ENCODE measurements at regions of chrX and their contacts with region 1.

Region 1: DNA sequence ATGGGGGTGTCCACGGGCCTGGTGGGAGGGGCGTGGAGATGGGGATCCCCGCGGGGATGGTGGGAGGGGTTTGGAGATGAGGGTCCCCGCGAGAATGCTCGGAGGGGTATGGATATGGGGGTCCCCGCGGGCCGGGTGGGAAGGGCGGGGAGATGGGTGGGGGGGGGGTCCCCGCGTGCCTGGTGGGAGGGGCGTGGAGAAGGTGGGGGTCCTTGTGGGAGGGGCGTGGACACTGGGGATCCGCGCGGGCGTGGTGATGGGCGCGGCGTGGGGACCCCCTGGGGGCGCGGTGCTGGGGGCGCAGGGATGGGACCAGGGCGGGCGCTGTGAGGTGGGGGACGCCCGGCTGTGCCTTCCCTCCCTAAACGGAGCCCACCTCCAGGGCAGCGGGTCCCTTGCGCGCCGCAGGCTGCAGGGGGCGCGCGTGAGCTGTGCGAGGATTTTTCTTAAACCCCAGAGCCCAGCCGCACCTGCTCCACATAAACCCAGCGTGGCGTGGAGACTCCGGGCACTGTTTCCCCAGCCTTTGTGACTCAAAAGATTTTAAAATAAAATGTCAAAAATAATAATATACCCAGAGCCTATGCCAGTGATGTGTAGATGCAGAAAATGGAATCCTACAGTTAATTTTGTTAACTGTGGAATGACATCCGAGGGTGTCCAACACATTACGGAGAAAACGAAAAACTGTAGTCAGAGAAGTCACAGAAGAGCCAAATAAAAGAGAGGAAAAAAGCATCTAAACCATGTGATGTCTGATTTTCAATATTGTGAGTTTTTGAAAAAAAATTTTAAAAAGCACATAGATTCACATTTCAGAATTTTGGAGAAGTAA is 1.5 kb upstream of the ASMTL start:
- DNase-seq: peak; percentile 46 to 91
- H3K4me3 ChIP-seq: peak overlapping the region; percentile 89
- H3K27ac ChIP-seq: peak overlapping the region; percentile 37 to 95
- H3K4me1 ChIP-seq: peaks cover 12 to 13% of the 10 kb centered on the region in 2 donors
- H3K27me3 ChIP-seq: no peaks in the 10 kb centered on the region
- CTCF ChIP-seq: peak; percentile 93 to 98 (median 98)

Region 2: DNA sequence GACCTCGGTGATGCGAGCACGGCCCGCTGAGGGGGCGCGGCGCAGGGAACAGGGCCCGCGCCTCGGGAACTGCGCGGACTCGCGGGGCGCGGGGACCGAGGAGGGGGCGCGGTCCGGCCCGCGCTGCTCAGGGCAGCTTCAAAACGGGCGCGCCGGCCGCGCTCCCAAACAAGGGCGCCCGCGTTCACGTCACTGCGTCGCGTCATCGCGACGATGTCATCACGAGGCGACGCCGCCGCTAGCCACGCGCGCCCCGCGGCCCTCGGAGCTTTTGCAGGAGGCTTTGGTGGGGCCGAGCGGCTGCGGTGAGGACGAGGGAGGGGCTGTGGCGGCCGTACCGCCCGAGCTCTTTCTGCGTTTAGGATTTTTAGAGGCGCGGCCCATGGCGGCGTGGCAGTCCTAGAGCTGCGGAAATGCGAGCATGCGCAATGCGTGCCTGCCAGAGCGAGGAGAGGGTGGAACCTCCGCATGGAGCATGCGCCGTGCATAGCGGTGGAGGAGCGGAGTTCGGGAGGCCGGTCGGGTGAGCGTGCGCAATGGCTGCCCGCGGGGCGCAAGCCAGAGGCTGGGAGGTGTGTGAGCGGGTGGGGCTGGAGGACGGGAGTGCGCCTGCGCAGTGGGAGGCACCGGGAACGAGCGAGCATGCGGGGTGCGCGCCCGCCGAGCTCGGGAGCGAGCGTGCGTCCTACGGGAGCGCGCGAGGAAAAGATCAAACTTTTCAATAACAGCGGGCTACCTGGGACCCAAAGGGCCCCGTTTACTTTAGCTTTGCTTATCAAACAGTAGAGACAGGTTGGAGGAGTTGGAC is 1067.2 kb before region 1 on chrX and contains the start of gene PPP2R3B:
- intact Hi-C with region 1: loop called (anchors 2 kb)
- DNase-seq: peak; percentile 91 to 99
- H3K4me3 ChIP-seq: peak within 1 kb of the TSS; percentile 72 to 92
- H3K27ac ChIP-seq: peak within 1 kb of the TSS; percentile 94 to 99
- H3K4me1 ChIP-seq: peaks cover 0 to 5% of the 10 kb centered on the region in 2 donors
- H3K27me3 ChIP-seq: no peaks in the 10 kb centered on the region
- CTCF ChIP-seq: no peak
- total RNA-seq, gene PPP2R3B: 43.4 TPM

Region 3: DNA sequence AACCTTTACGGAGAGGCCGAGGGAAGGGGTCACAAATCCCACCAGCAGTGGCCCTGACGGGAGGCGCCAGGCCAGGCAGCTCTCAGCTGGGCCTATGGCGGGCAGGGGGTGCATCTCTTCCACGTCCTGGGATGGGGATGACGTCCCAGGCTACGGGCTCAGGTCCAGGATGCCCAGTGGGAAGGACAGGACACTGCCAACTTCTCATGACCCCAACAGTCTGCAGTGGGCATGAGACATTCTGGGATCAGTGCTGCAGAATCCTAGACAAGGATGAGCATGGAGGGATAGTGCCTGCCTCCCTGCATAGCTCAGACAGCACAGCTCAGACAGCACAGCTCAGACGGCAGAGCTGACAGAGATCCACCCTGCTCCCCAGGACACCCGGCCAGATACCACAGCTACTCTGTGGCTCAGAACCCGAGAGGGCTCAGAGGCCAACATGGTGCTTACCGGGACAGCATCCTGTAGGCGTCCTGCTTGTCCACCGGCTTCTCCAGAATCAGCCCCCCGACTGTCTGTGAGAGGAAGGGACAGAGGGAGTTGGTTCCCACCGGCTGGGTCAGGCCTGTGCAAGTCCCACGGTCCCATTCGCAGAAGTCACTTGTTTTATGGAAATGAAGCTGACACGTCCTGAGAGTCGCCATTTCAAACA is 18.8 kb before region 1 on chrX:
- intact Hi-C with region 1: no loop called
- DNase-seq: peak in 1 of 2 donors; percentile 42
- H3K4me3 ChIP-seq: no peak overlapping the region
- H3K27ac ChIP-seq: no peak overlapping the region
- H3K4me1 ChIP-seq: no peaks in the 10 kb centered on the region
- H3K27me3 ChIP-seq: no peaks in the 10 kb centered on the region
- CTCF ChIP-seq: no peak

Region 4: GRCh38 chrX:2325076-2325784 is 871.1 kb after region 1 on chrX:
- intact Hi-C with region 1: loop called (anchors 5 kb)
- DNase-seq: peak; percentile 46 to 90
- H3K4me3 ChIP-seq: peak overlapping the region; percentile 61 to 67
- H3K27ac ChIP-seq: peak overlapping the region; percentile 71 to 78
- H3K4me1 ChIP-seq: no peaks in the 10 kb centered on the region
- H3K27me3 ChIP-seq: no peaks in the 10 kb centered on the region
- CTCF ChIP-seq: no peak

Region 5: DNA sequence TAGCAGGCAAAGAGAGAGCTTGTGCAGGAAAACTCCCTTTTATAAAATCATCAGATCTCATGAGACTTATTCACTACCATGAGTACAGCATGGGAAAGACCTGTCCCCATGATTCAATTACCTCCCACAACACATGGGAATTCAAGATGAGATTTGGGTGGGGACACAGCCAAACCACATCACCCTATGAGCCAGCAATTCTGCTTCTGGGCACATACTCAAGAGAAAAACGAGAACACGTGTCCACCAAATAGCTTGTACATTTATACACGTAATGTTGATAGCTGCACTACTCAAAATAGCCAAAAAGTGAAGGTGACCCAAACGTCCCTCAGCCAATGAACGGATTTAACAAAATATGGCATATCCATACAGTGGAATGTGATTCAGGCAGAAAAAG is 1141.1 kb after region 1 on chrX:
- intact Hi-C with region 1: loop called (anchors 2 kb)
- DNase-seq: no peak
- H3K4me3 ChIP-seq: no peak overlapping the region
- H3K27ac ChIP-seq: no peak overlapping the region
- H3K4me1 ChIP-seq: no peaks in the 10 kb centered on the region
- H3K27me3 ChIP-seq: no peaks in the 10 kb centered on the region
- CTCF ChIP-seq: no peak

Region 6: DNA sequence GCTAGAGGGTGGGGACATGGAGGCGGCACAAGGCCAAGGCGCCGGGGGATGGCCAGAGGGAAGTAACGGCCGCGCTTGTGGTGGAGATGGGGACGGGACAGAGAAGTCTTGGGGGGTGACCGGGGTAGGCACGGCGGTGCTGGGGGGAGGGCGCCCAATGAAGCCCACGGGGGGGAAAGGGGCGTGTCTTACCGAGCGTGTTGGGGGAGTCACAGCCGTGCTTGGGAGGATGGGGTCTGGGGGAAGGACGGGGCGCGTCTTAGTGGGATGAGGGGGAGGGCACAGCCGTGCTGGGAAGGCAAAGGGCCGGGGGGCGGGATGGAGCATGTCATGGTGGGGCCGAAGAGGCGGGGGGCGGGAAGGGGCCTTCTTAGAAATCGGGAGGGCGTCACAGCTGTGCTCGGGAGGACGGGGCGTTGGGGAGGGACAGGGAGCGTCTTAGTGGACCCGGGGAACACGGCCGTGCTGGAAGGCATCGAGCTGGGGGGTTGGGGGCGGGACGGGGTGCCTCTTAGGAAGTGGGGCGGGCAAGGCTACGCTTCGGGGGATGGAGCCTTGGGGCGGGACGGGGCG is 1474.1 kb after region 1 on chrX:
- intact Hi-C with region 1: loop called (anchors 1 kb)
- DNase-seq: peak in 1 of 2 donors; percentile 24
- H3K4me3 ChIP-seq: peak overlapping the region; percentile 83 to 92
- H3K27ac ChIP-seq: peak overlapping the region; percentile 97 to 99
- H3K4me1 ChIP-seq: no peaks in the 10 kb centered on the region
- H3K27me3 ChIP-seq: no peaks in the 10 kb centered on the region
- CTCF ChIP-seq: no peak